ENCODE measurements at regions of chr7 and their contacts with region 1.

Region 1: GRCh38 chr7:31663072-31663471 is 23.9 kb upstream of the PPP1R17 start:
- DNase-seq: no peak
- H3K4me3 ChIP-seq: no peak overlapping the region
- H3K27ac ChIP-seq: no peak overlapping the region
- H3K4me1 ChIP-seq: no peaks in the 10 kb centered on the region
- H3K27me3 ChIP-seq: no peaks in the 10 kb centered on the region
- CTCF ChIP-seq: no peak
- POLR2A ChIP-seq: no peak

Region 2: GRCh38 chr7:31853380-31853779 is 190.3 kb after region 1 on chr7:
- intact Hi-C with region 1: loop called (anchors 10 kb)
- DNase-seq: no peak
- H3K4me3 ChIP-seq: no peak overlapping the region
- H3K27ac ChIP-seq: no peak overlapping the region
- H3K4me1 ChIP-seq: no peaks in the 10 kb centered on the region
- H3K27me3 ChIP-seq: no peaks in the 10 kb centered on the region
- CTCF ChIP-seq: no peak
- POLR2A ChIP-seq: no peak

Measured in breast epithelium (tissue), 4 donors.